Panc1 (cell line): ENCODE measurements at regions of chr9 and their contacts with region 1.

Region 1: GRCh38 chr9:2859776-2860379 is 16.0 kb upstream of the PUM3 start:
- DNase-seq: peak; percentile 18
- ATAC-seq: no peak
- H3K4me3 ChIP-seq: no peak overlapping the region
- H3K27ac ChIP-seq: no peak overlapping the region
- H3K4me1 ChIP-seq: no peaks in the 10 kb centered on the region
- H3K27me3 ChIP-seq: no peaks in the 10 kb centered on the region
- CTCF ChIP-seq: peak; percentile 71

Region 2: DNA sequence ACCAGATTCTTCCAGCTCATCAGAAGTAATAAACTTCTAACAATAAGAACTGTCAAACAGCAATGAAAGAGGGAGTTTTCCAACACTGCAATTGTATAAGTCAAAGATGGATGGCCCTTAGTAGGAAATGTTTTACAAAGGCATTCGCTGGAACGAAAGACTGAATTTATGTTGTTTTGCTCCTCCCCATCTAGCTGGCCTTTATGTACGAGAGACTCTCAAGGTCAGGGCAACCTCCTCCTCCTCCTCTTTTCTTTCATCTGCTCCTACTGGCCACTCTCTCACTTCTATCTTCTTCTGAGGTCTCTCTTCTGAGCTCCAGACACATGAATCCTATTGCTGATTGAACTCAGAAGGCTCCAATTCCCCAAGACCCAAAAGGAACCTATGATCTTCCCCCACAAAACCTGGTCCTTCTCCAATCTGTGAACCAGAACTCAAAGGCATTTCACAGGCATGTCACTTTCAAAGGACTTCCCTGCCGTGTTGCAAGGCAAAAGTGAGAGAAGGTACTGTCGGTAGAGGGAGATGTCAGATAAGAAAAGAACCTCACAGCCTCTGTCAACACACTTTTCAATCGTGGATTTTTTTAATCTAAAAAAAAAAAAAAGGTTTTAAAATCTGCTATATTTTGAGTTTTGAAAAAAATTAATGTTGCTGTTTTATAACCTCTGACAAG is 12.5 kb after region 1 on chr9:
- CTCF ChIA-PET with region 1: no interaction called
- POLR2A ChIA-PET with region 1: no interaction called
- in situ Hi-C with region 1: no loop called
- intact Hi-C with region 1: no loop called
- DNase-seq: no peak
- ATAC-seq: no peak
- H3K4me3 ChIP-seq: no peak overlapping the region
- H3K27ac ChIP-seq: no peak overlapping the region
- H3K4me1 ChIP-seq: no peaks in the 10 kb centered on the region
- H3K27me3 ChIP-seq: no peaks in the 10 kb centered on the region
- CTCF ChIP-seq: peak; percentile 30

Region 3: DNA sequence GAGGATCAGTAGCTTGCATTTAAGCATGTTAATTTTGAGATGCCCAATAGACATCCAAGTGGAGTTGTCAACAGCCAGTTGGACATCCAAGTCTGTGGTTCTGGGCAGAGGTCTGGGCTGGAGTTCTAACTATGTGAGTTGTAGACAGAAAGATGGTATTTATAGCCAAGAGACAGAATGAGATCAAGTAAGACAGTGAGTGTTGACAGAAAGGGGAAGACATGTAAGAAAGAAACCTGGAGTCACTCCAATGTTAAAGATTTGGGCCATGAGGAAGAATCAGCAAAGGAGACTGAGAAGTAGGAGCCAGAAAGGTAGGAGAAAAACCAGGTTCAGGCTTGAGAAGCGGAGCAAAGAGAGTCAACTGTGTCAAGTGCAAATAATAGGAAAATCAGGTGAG is 79.5 kb after region 1 on chr9:
- CTCF ChIA-PET with region 1: no interaction called
- POLR2A ChIA-PET with region 1: no interaction called
- in situ Hi-C with region 1: no loop called
- intact Hi-C with region 1: no loop called
- DNase-seq: no peak
- ATAC-seq: no peak
- H3K4me3 ChIP-seq: no peak overlapping the region
- H3K27ac ChIP-seq: no peak overlapping the region
- H3K4me1 ChIP-seq: no peaks in the 10 kb centered on the region
- H3K27me3 ChIP-seq: no peaks in the 10 kb centered on the region
- CTCF ChIP-seq: no peak

Region 4: DNA sequence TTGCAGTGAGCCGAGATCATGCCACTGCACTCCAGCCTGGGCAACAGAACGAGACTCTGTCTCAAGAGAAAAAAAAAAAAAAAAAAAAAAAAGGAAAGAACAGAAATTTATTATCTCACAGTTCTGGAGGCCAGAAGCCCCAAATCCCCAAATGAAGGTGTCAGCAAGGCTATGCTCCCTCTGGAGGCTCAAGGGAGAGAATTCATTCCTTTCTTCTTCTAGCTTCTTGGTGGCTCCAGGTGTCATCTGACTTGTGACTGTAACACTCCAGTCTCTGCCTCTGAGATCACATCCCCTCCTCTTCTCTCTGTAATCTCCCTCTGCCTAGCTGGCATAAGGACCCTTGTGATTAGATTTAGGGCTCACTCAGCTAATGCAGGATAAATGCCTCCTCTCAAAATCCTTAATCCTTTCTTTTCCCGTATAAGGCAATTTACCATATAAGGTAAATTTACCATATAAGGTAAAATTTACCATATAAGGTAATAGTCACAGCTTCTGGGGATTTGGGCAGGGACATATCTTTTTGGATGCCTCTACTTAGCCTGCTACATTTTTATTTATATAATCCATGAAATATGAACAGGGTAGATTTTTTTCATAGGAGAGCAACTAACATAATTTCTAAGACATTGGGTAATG is 301.9 kb after region 1 on chr9:
- CTCF ChIA-PET with region 1: no interaction called
- POLR2A ChIA-PET with region 1: no interaction called
- in situ Hi-C with region 1: no loop called
- intact Hi-C with region 1: no loop called
- DNase-seq: no peak
- ATAC-seq: no peak
- H3K4me3 ChIP-seq: no peak overlapping the region
- H3K27ac ChIP-seq: no peak overlapping the region
- H3K4me1 ChIP-seq: no peaks in the 10 kb centered on the region
- H3K27me3 ChIP-seq: no peaks in the 10 kb centered on the region
- CTCF ChIP-seq: no peak

Region 5: GRCh38 chr9:4375424-4376200 is 1515.7 kb after region 1 on chr9:
- CTCF ChIA-PET with region 1: no interaction called
- POLR2A ChIA-PET with region 1: no interaction called
- in situ Hi-C with region 1: no loop called
- intact Hi-C with region 1: loop called (anchors 5 kb)
- DNase-seq: no peak
- ATAC-seq: no peak
- H3K4me3 ChIP-seq: no peak overlapping the region
- H3K27ac ChIP-seq: no peak overlapping the region
- H3K4me1 ChIP-seq: no peaks in the 10 kb centered on the region
- H3K27me3 ChIP-seq: no peaks in the 10 kb centered on the region
- CTCF ChIP-seq: peak; percentile 40; the same call in 1 of the 2 replicates